Sciatic nerve (tissue), 2 donors: ENCODE measurements at regions of chr2 and their contacts with region 1.

Region 1: DNA sequence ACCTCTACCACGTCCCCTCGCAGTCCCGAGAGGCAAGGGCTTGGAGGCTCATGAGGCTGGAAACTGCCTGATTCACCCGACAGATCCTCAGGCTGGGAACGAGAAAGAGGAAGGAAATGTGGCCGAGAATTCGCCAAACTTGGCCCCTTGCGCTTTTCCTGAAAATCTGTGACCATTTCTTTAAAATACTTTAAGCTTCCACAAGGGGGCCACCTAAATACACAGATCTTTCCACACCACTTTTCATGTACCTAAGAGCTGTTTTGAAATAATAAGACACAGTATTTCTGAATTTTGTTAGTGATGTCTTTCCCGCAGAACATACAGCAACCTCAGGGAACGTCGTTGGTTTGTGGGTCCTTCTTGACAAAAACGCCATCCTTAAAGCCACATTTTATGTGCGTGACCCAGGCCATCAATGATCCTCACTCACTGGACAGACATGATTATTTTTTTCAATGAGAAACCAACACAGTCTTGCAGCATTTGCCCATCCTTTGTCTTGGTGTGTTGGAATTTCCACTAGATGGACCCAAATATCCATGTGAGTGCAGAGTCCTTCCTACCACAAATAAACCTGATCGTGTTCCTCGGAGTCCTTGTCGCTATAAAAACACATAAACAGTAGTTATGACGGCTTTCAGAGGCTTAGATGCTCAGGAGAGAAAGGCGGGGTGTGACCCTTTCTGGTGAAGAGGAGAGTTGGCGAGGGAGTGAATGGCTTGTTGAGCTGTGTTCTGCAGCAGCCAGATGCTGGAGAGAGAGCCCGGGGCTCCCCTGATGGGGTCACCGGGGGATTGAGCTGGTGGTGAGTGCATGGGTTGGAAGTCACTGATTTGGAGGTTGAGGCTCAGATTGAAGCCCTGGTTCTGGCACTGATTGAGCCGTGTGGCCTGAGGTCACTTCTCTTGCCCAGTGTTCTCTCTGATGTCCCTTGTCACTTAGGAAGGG is 25.0 kb downstream of the DCDC2C start:
- DNase-seq: no peak
- ATAC-seq: peak; percentile 90

Region 2: GRCh38 chr2:3780477-3781402 is 52.4 kb after region 1 on chr2:
- intact Hi-C with region 1: loop called (anchors 10 kb)
- DNase-seq: peak; percentile 80
- ATAC-seq: peak; percentile 94

Region 3: GRCh38 chr2:3876685-3877084 is 148.3 kb after region 1 on chr2:
- intact Hi-C with region 1: no loop called
- DNase-seq: no peak
- ATAC-seq: no peak